Gastrocnemius medialis (tissue), 4 donors: ENCODE measurements at regions of chr16 and their contacts with region 1.

Region 1: GRCh38 chr16:70646260-70647241 is at the start of gene IL34:
- DNase-seq: peak; percentile 95 to 97
- ATAC-seq: peak; percentile 94 to 96
- H3K4me3 ChIP-seq: peak within 1 kb of the TSS; percentile 19 to 55 (median 50)
- H3K27ac ChIP-seq: peak within 1 kb of the TSS; percentile 71 to 94 (median 88)
- H3K4me1 ChIP-seq: peaks cover 13 to 18% of the 10 kb centered on the region in 2 donors
- H3K27me3 ChIP-seq: no peaks in the 10 kb centered on the region
- CTCF ChIP-seq: peak in 1 of 5 experiments; percentile 17
- POLR2A ChIP-seq: peak; percentile 15 to 56
- total RNA-seq, gene IL34: 0.71 to 93.0 (median 22.1) TPM

Region 2: DNA sequence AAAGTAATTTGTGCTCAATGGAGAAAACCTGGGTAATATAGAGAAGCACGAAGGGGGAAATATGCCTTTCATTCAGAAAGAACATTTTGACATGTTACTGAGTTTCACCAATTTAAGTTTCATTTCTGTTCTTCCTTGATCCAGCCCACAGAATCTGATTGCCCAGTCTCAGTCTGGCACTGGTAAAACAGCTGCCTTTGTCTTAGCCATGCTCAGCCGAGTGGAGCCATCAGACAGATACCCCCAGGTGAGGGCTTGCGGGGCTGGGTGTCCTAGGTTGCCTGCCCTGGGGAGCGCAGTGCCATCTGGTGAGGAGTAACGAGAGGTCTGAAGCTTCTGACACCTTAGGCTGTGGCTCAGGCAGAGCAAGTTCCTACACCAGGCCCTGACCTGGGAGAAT is 282.2 kb before region 1 on chr16:
- in situ Hi-C with region 1: loop called (anchors 10 to 25 kb)
- intact Hi-C with region 1: no loop called
- DNase-seq: no peak
- ATAC-seq: no peak
- H3K4me3 ChIP-seq: no peak overlapping the region
- H3K27ac ChIP-seq: peak overlapping the region in 1 of 4 donors; percentile 85
- H3K4me1 ChIP-seq: peaks cover 0 to 14% of the 10 kb centered on the region in 2 donors
- H3K27me3 ChIP-seq: no peaks in the 10 kb centered on the region
- CTCF ChIP-seq: no peak
- POLR2A ChIP-seq: no peak

Region 3: DNA sequence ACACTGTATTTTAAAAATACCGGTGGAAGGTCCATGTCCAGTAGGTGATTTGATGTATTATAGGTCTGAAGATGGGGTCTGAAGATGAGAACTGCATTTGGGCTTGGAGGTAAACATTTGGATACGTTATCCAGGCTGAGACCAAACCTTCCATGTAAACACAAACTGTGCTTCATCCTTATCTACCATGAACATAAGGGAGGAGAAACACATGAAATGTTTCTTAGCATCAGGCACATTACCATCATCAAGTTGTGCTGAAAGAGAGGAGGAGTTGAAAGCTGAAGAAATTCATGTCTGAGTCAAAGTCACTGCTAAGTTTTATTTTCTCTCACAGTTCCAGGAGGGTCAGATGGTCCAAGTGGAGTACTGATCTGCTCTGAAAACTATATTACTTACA is 111.6 kb before region 1 on chr16:
- in situ Hi-C with region 1: loop called in 3 of 4 experiments (anchors 5 to 10 kb)
- intact Hi-C with region 1: no loop called
- DNase-seq: no peak
- ATAC-seq: no peak
- H3K4me3 ChIP-seq: no peak overlapping the region
- H3K27ac ChIP-seq: no peak overlapping the region
- H3K4me1 ChIP-seq: no peaks in the 10 kb centered on the region
- H3K27me3 ChIP-seq: no peaks in the 10 kb centered on the region
- CTCF ChIP-seq: no peak
- POLR2A ChIP-seq: no peak

Region 4: DNA sequence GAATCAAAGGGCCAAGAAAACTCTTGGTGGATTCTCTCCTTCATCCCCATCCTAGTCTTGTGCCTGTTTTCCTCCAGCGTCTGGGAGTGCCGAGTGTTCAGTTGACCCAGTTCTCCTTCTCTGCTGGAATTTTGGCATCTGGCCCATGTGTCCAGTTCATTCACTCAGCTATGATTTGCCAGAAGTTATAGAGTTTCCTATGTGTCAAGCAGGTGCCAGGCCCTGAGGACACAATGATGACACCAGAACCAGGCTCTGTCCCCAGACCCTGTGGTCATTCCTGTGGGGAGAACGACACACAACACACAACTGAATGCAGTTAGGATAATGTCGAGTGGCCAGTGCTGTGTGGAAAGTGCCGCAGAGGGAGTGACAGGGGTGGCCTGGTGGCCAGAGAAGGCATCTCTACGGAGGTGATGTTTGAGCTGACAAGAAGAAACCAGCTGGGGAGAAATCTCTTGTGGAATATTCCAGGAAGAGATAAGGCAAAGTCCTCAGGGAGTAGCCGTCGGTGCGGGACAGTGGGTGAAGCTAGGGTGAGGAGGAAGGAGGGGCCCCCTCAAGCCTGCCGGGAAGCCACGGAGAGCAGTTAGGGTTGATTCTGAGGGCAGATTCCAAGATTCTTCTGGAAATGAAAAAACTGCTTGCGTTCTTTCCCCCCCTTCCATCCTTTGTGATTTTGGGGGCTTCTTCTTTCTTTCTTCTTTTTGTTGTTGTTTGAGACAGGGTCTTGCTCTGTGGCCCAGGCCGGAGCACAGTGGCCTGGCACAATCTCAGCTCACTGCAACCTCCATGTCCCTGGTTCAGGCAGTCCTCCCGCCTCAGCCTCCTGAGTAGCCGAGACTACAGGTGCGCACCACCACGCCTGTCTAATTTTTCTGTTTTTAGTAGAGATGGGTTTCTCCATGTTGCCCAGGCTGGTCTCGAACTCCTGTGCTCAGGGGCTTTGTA is 36.0 kb before region 1 on chr16:
- in situ Hi-C with region 1: no loop called
- intact Hi-C with region 1: loop called (anchors 2 kb)
- DNase-seq: peak; percentile 90 to 91
- ATAC-seq: peak; percentile 93 to 94
- H3K4me3 ChIP-seq: peak overlapping the region in 2 of 4 donors; percentile 10 to 19
- H3K27ac ChIP-seq: peak overlapping the region; percentile 68 to 89 (median 74)
- H3K4me1 ChIP-seq: peaks cover 19 to 26% of the 10 kb centered on the region in 2 donors
- H3K27me3 ChIP-seq: no peaks in the 10 kb centered on the region
- CTCF ChIP-seq: peak in 1 of 5 experiments; percentile 6
- POLR2A ChIP-seq: peak in 1 of 2 donors; percentile 29

Region 5: GRCh38 chr16:70679666-70680494 is 33.3 kb after region 1 on chr16:
- in situ Hi-C with region 1: no loop called
- intact Hi-C with region 1: no loop called
- DNase-seq: no peak
- ATAC-seq: peak in 1 of 2 donors; percentile 27
- H3K4me3 ChIP-seq: no peak overlapping the region
- H3K27ac ChIP-seq: peak overlapping the region; percentile 40 to 63 (median 48)
- H3K4me1 ChIP-seq: peaks cover 30 to 45% of the 10 kb centered on the region in 2 donors
- H3K27me3 ChIP-seq: no peaks in the 10 kb centered on the region
- CTCF ChIP-seq: peak in 4 of 5 experiments; percentile 72 to 88 (median 84)
- POLR2A ChIP-seq: no peak